ENCODE measurements at regions of chr11 and their contacts with region 1.

Region 1: GRCh38 chr11:76799066-76799804 is 16.1 kb downstream of the TSKU start:
- DNase-seq: peak; percentile 83 to 89
- ATAC-seq: peak; percentile 36 to 69
- H3K4me3 ChIP-seq: peak overlapping the region; percentile 11; the same call in 2 of the 3 replicates
- H3K27ac ChIP-seq: peak overlapping the region; percentile 85 to 98
- H3K4me1 ChIP-seq: peaks cover 100% of the 10 kb centered on the region
- CTCF ChIP-seq: peak; percentile 83
- EP300 ChIP-seq: peak in 1 of 2 experiments; percentile 46; a peak in 2 of 5 replicates
- POLR2A ChIP-seq: no peak
- RAD21 ChIP-seq: peak; percentile 71 to 90

Region 2: DNA sequence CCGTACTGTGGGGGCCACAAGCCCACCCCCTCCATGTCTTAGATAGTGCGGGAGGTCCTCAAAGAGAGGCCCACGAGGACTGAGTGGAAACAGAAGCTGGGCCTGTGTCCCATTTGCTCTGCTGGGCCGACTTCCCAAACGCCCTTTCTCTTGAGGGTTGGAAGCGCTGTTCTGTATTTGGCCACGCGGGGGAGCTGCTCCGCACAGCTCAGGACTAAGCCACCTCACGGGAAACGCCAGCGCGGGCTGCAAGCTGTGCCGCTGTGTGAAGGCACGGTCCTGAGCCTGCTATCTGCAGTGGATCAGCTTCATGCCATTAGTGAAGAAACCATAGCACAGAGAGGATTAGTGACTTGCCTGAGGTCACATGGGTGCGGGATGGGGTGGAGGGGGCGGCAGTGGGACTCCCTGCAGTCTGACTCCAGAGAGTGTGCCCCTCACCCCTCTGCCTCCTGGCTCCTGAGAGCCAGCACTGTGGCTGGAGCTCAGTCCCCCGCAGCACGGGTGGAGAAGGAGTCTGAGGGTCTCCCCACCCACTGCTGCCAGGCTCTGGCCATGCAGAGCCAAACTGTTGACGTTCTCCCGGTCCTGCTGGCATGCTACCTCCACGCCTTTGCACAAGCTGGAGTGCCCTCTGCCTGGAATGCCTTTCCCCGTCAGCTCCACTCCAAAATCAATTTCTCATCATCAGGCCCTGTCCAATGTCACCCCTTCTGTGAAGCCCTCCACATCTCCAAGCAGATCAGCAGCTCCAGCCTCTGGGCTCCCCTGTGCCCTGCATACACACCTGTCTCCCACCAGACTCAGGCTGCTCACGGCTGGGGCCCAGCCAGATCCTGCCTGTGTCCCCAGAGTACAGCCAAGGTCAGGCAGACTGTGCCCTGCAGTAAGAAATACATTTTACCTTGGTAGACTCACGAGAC is 77.2 kb before region 1 on chr11:
- CTCF ChIA-PET with region 1: interaction called, 68 read pairs
- POLR2A ChIA-PET with region 1: no interaction called
- DNase-seq: peak; percentile 67 to 80
- ATAC-seq: peak; percentile 91 to 97
- H3K4me3 ChIP-seq: no peak overlapping the region
- H3K27ac ChIP-seq: peak overlapping the region in 1 of 2 experiments; percentile 61; a peak in 3 of 6 replicates
- H3K4me1 ChIP-seq: 0 out of 3 replicates have a peak, but pooled peaks cover 4% of the 10 kb centered on the region
- CTCF ChIP-seq: peak; percentile 83
- EP300 ChIP-seq: no peak
- POLR2A ChIP-seq: no peak
- RAD21 ChIP-seq: peak; percentile 68

Region 3: GRCh38 chr11:76756341-76756741 is 42.9 kb before region 1 on chr11:
- CTCF ChIA-PET with region 1: interaction called, 20 read pairs
- POLR2A ChIA-PET with region 1: no interaction called
- DNase-seq: no peak
- ATAC-seq: no peak
- H3K4me3 ChIP-seq: no peak overlapping the region
- H3K27ac ChIP-seq: peak overlapping the region in 1 of 2 experiments; percentile 50; a peak in 2 of 6 replicates
- H3K4me1 ChIP-seq: peaks cover 26% of the 10 kb centered on the region; the same call in 2 of the 3 replicates
- CTCF ChIP-seq: no peak
- EP300 ChIP-seq: no peak
- POLR2A ChIP-seq: no peak
- RAD21 ChIP-seq: no peak

Region 4: GRCh38 chr11:76768088-76768908 is 30.9 kb before region 1 on chr11:
- CTCF ChIA-PET with region 1: interaction called, 27 read pairs
- POLR2A ChIA-PET with region 1: interaction called, 25 read pairs
- DNase-seq: no peak
- ATAC-seq: no peak
- H3K4me3 ChIP-seq: peak overlapping the region; percentile 58
- H3K27ac ChIP-seq: peak overlapping the region; percentile 97 to 100
- H3K4me1 ChIP-seq: peaks cover 95% of the 10 kb centered on the region
- CTCF ChIP-seq: no peak
- EP300 ChIP-seq: no peak
- POLR2A ChIP-seq: peak; percentile 36
- RAD21 ChIP-seq: no peak

Region 5: GRCh38 chr11:76782526-76783293 is 16.5 kb before region 1 on chr11:
- CTCF ChIA-PET with region 1: interaction called, 36 read pairs
- POLR2A ChIA-PET with region 1: interaction called, 7 read pairs
- DNase-seq: peak; percentile 87 to 95
- ATAC-seq: peak; percentile 66 to 71
- H3K4me3 ChIP-seq: peak overlapping the region; percentile 71
- H3K27ac ChIP-seq: peak overlapping the region; percentile 96 to 98
- H3K4me1 ChIP-seq: peaks cover 36% of the 10 kb centered on the region
- CTCF ChIP-seq: no peak
- EP300 ChIP-seq: peak; percentile 15 to 46; a peak in 3 of 5 replicates
- POLR2A ChIP-seq: peak; percentile 57
- RAD21 ChIP-seq: peak; percentile 2 to 34; a peak in 1 of 5 replicates